Right lobe of liver (tissue), 6 donors: ENCODE measurements at regions of chr11 and their contacts with region 1.

Region 1: DNA sequence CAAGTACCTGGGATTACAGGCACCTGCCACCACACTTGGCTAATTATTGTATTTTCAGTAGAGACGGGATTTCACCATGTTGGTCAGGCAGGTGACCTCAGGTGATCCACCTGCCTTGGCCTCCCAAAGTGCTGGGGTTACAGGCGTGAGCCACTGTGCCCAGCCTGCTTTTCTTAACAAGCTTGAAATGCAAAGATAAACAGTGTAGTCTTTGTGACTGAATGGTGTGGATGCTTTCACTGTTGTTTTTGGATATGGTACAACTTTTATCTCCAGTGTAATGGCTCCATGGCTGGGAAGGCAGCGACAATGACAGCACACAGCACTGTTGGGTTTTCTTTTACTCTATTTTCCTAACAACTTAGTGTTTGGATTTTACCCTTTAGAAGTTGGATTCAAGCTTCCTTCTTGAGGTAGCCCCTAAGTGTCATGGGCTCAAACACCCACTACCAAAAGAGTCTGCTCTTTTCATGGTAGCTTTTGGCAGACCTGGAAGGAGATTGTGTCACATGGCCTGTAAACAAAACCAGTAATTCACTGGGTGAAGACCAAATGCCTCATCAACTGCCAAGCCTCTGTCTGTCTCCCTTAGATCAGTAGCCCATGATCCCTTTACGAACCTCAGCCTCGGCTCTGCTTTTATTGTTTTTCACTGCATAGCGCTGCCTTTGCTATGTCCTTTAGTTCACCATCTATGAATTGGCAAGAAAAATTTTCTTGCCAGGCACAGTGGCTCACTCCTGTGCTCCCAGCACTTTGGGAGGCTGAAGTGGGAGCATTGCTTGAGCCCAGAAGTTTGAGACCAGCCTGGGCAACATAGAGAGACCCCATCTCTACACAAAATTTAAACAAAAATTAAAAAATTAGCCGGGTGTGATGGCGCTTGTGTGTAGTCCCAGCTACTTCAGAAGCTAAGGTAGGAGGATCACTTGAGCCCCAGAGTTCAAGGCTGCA is 6.4 kb downstream of the VPS51 start:
- DNase-seq: peak; percentile 47 to 80 (median 74)
- ATAC-seq: peak; percentile 86 to 89 (median 86)
- H3K4me3 ChIP-seq: no peak overlapping the region
- H3K27ac ChIP-seq: peak overlapping the region; percentile 7 to 81 (median 59)
- H3K4me1 ChIP-seq: peaks cover 0 to 46% (median 20%) of the 10 kb centered on the region in 4 donors
- H3K27me3 ChIP-seq: no peaks in the 10 kb centered on the region
- CTCF ChIP-seq: no peak
- POLR2A ChIP-seq: no peak

Region 2: DNA sequence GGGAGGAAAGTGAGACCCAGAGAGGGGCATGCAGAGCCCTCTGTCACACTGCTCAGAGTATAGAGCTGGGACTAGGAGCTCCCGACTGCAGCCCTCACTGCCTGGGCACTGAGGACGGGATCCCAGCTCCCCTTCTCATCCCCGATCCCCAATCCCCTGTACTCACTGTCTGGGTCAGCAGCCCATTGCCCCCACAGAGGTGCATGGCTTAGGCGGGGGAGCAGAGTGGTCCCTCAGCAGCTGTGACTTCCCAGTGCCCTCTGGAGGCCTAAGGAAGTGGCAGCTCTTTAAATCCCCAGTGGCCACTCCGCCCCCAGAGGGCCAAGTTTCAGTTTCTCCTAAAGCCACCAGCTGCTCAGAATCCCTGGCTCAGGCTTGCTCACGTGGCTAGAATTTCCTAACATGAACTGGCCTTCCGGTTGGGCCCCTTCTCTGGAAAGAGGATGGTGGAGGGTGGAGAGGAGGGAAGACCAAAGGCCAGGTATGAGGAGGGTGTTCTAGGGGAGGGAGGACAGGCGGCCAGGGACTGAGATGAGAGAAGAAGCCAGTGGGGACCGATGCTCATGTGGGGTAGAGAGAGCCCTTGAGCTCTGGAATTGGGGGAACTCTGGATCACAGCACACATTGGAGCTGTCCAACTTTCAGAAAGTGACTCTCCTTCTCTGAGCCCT is 105.6 kb before region 1 on chr11 and contains the start of gene BATF2:
- intact Hi-C with region 1: no loop called
- DNase-seq: peak; percentile 85 to 92 (median 88)
- ATAC-seq: peak; percentile 97 to 99 (median 98)
- H3K4me3 ChIP-seq: peak within 1 kb of the TSS; percentile 52 to 70 (median 58)
- H3K27ac ChIP-seq: peak within 1 kb of the TSS; percentile 47 to 72 (median 60)
- H3K4me1 ChIP-seq: peaks cover 0 to 13% (median 5%) of the 10 kb centered on the region in 4 donors
- H3K27me3 ChIP-seq: no peaks in the 10 kb centered on the region
- CTCF ChIP-seq: peak; percentile 47 to 59 (median 53)
- POLR2A ChIP-seq: peak; percentile 89
- total RNA-seq, gene BATF2: 1.9 to 2.5 (median 2.3) TPM

Region 3: DNA sequence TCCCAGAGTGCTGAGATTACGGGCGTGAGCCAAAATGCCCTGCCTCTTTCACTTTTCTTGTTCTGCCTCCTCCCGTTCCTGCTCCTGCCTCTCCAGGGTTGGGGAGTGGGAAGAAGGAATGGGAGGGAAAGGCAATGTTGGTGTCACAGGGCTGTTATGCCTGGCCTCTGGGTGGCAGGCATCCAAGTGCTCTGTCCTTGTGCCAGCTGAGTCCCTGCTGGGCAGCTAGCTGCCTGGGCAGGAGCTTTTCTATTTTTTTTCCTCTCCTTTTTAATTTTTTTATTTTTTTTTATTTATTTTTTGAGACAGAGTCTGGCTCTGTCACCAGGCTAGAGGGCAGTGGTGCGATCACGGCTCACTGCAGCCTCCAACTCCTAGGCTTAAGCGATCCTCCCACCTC is 65.5 kb before region 1 on chr11:
- intact Hi-C with region 1: loop called in 1 of 2 experiments (anchors 10 kb)
- DNase-seq: peak; percentile 76 to 85 (median 82)
- ATAC-seq: peak in 1 of 4 donors; percentile 6
- H3K4me3 ChIP-seq: no peak overlapping the region
- H3K27ac ChIP-seq: no peak overlapping the region
- H3K4me1 ChIP-seq: peaks cover 0 to 8% (median 1%) of the 10 kb centered on the region in 4 donors
- H3K27me3 ChIP-seq: no peaks in the 10 kb centered on the region
- CTCF ChIP-seq: no peak
- POLR2A ChIP-seq: no peak

Region 4: DNA sequence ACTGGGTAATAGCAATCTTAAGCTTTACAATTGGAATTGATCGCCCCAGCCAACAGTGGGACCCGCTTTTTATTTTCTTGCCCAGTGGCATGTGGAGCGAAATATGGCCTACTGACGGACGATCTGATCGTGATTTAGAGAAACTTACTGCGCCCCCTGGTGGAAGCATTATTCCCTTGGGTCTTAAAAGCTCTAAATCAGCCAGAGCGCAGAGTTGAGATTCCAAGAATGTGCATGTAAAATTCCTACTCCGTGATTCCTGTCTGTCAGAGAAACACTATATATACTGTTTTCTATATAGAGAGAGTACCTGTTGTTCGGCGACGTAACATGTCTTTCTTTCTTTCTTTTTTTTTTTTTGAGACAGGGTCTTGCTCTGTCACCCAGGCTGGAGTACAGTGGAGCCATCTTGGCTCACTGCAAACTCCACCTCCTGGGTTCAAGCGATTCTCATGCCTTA is 227.6 kb after region 1 on chr11:
- intact Hi-C with region 1: no loop called
- DNase-seq: peak in 2 of 3 donors; percentile 70 to 87
- ATAC-seq: peak; percentile 51 to 64 (median 60)
- H3K4me3 ChIP-seq: no peak overlapping the region
- H3K27ac ChIP-seq: no peak overlapping the region
- H3K4me1 ChIP-seq: peaks cover 0 to 7% (median 3%) of the 10 kb centered on the region in 4 donors
- H3K27me3 ChIP-seq: no peaks in the 10 kb centered on the region
- CTCF ChIP-seq: peak; percentile 71 to 85 (median 80)
- POLR2A ChIP-seq: no peak